PC-9 (cell line): ENCODE measurements at regions of chr5 and their contacts with region 1.

Region 1: DNA sequence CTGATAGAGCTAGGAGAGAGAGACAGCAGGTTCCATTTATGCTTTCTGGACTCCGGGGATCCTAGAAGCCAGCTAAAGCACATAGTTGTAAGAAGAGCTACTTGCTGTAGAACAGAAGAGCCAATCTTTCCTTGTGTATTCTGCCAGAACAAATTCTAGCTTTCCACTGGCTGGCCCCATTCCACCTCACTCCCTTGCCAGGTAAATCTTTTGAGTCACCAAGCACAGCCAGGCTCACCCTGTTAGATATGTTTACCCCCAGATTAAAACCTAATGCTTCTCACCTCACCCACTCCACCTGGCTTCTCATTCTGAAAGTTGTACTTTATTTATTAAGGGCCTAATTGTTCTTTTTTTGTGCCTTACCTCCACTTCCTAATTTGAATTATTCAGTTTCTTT is 48.9 kb upstream of the CHD1 start:
- DNase-seq: peak in 1 of 2 experiments; percentile 3
- H3K4me3 ChIP-seq: no peak overlapping the region
- H3K27ac ChIP-seq: no peak overlapping the region
- H3K4me1 ChIP-seq: peaks cover 10% of the 10 kb centered on the region
- H3K27me3 ChIP-seq: no peaks in the 10 kb centered on the region
- CTCF ChIP-seq: no peak

Region 2: GRCh38 chr5:98989727-98990126 is 12.0 kb after region 1 on chr5:
- CTCF ChIA-PET with region 1: no interaction called
- POLR2A ChIA-PET with region 1: interaction called, 22 read pairs
- intact Hi-C with region 1: no loop called
- DNase-seq: no peak
- H3K4me3 ChIP-seq: no peak overlapping the region
- H3K27ac ChIP-seq: no peak overlapping the region
- H3K4me1 ChIP-seq: no peaks in the 10 kb centered on the region
- H3K27me3 ChIP-seq: no peaks in the 10 kb centered on the region
- CTCF ChIP-seq: no peak